ENCODE measurements at regions of chr19 and their contacts with region 1.

Region 1: GRCh38 chr19:36528194-36528920 is at the start of gene ZNF260:
- H3K4me3 ChIP-seq: peak within 1 kb of the TSS; percentile 91
- H3K27ac ChIP-seq: peak within 1 kb of the TSS; percentile 96
- H3K4me1 ChIP-seq: peaks cover 8% of the 10 kb centered on the region; the same call in 1 of the 2 replicates
- CTCF ChIP-seq: peak; percentile 45; the same call in 1 of the 2 replicates

Region 2: DNA sequence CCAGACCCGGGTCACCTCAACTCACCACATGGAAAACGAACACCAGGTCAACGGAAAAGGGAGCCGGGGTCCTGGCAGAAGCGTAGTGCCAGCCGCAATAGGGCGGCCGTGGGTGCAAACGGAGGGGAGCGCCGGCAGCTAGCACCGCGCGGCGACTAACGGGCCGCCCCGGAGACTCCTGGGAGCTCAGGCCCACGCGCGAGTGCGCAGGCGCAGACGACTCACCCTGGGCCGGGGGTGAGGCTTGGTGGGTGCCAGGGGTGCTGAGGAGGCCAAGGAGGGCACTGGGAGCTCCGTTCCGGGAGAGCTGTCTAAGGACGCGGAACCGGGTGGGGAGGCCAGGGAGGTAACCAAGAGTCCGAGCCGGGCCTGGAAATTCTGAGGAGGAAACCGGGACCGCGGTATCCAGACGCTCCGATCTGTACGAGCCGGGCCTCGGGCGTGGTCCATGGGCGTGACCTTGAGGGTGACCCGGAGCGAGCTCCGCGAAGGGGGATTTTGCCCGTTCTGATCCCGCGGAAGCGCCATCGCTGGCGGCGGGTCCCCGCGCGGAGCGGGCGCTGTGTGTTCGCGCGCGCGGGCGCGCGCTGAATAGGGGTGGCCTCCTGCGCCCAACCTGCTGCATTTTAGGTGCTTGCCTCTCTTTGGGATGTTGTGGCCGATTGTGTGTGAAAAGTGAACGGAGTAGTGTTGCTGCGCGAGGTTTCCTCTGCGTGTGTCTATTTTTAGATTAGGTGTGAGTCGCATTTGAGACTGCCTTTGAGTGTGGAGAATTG is 76.9 kb after region 1 on chr19 and contains the start of gene ZNF382:
- CTCF ChIA-PET with region 1: no interaction called
- POLR2A ChIA-PET with region 1: interaction called, 31 read pairs
- H3K4me3 ChIP-seq: peak within 1 kb of the TSS; percentile 57
- H3K27ac ChIP-seq: peak within 1 kb of the TSS; percentile 98
- H3K4me1 ChIP-seq: peaks cover 6% of the 10 kb centered on the region
- CTCF ChIP-seq: no peak; the same call in none of the 2 replicates

Region 3: GRCh38 chr19:37077934-37078725 is 549.8 kb after region 1 on chr19 and contains the start of gene ZNF420:
- CTCF ChIA-PET with region 1: no interaction called
- POLR2A ChIA-PET with region 1: interaction called, 10 read pairs
- H3K4me3 ChIP-seq: peak within 1 kb of the TSS; percentile 73
- H3K27ac ChIP-seq: peak within 1 kb of the TSS; percentile 57
- H3K4me1 ChIP-seq: peaks cover 7% of the 10 kb centered on the region; the same call in 1 of the 2 replicates
- CTCF ChIP-seq: no peak; the same call in none of the 2 replicates